ENCODE measurements at regions of chr5 and their contacts with region 1.

Region 1: DNA sequence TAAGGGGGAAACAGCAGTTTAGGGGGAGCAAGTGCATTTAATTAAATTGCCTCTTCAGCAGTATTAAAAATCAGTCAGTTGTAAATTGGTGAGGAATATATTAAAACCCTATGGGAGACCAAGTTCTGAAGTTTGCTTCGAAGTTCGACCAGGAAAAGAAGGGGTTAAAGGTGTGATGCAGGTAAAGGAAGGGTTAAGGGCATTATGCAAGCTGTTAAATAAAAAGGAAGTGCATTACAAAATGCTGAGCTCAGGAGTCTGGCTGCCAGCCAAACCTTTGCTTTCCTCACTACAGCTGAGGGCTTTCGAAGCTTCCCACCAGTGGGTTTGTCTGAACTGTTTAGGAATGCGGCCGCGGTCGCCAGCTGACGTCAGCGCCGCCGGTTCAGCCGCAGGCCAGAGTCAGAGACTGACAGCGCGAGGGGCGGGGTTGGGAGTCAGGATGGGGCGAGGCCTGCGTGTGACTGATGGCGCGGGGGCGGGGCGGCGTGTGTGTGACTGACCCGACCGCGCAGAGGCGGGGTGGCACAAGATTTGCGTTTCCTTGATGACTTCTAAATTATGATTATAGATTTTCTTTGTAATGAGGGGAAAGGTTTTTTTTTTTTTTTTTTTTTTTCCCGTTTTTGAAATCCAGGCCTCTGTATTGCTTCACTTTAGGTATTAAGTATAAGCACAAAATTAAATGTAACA is 76.6 kb downstream of the ZSWIM6 start:
- DNase-seq: peak; percentile 90
- H3K4me3 Mint-ChIP-seq: peak overlapping the region; percentile 59
- H3K27ac Mint-ChIP-seq: peak overlapping the region; percentile 56
- H3K4me1 Mint-ChIP-seq: peaks cover 23% of the 10 kb centered on the region
- H3K27me3 Mint-ChIP-seq: peaks cover 7% of the 10 kb centered on the region

Region 2: GRCh38 chr5:60340965-60341471 is 1067.6 kb before region 1 on chr5:
- intact Hi-C with region 1: no loop called
- DNase-seq: no peak
- H3K4me3 Mint-ChIP-seq: no peak overlapping the region
- H3K27ac Mint-ChIP-seq: no peak overlapping the region
- H3K4me1 Mint-ChIP-seq: no peaks in the 10 kb centered on the region
- H3K27me3 Mint-ChIP-seq: no peaks in the 10 kb centered on the region

Region 3: GRCh38 chr5:60826653-60827052 is 582.0 kb before region 1 on chr5:
- intact Hi-C with region 1: loop called (anchors 10 kb)
- DNase-seq: no peak
- H3K4me3 Mint-ChIP-seq: no peak overlapping the region
- H3K27ac Mint-ChIP-seq: no peak overlapping the region
- H3K4me1 Mint-ChIP-seq: peaks cover 31% of the 10 kb centered on the region
- H3K27me3 Mint-ChIP-seq: no peaks in the 10 kb centered on the region

Region 4: GRCh38 chr5:61162010-61162831 is 246.4 kb before region 1 on chr5 and contains the start of gene SMIM15:
- intact Hi-C with region 1: loop called (anchors 1 kb)
- DNase-seq: peak; percentile 81
- H3K4me3 Mint-ChIP-seq: peak within 1 kb of the TSS; percentile 95
- H3K27ac Mint-ChIP-seq: peak within 1 kb of the TSS; percentile 92
- H3K4me1 Mint-ChIP-seq: peaks cover 40% of the 10 kb centered on the region
- H3K27me3 Mint-ChIP-seq: no peaks in the 10 kb centered on the region
- total RNA-seq, gene SMIM15: 84.0 and 86.7 TPM in 2 replicates

Region 5: GRCh38 chr5:61280205-61280604 is 128.4 kb before region 1 on chr5:
- intact Hi-C with region 1: loop called (anchors 5 kb)
- DNase-seq: no peak
- H3K4me3 Mint-ChIP-seq: no peak overlapping the region
- H3K27ac Mint-ChIP-seq: no peak overlapping the region
- H3K4me1 Mint-ChIP-seq: peaks cover 11% of the 10 kb centered on the region
- H3K27me3 Mint-ChIP-seq: no peaks in the 10 kb centered on the region

Region 6: GRCh38 chr5:61440596-61440995 is 32.0 kb after region 1 on chr5:
- intact Hi-C with region 1: no loop called
- DNase-seq: no peak
- H3K4me3 Mint-ChIP-seq: no peak overlapping the region
- H3K27ac Mint-ChIP-seq: no peak overlapping the region
- H3K4me1 Mint-ChIP-seq: no peaks in the 10 kb centered on the region
- H3K27me3 Mint-ChIP-seq: no peaks in the 10 kb centered on the region

Region 7: DNA sequence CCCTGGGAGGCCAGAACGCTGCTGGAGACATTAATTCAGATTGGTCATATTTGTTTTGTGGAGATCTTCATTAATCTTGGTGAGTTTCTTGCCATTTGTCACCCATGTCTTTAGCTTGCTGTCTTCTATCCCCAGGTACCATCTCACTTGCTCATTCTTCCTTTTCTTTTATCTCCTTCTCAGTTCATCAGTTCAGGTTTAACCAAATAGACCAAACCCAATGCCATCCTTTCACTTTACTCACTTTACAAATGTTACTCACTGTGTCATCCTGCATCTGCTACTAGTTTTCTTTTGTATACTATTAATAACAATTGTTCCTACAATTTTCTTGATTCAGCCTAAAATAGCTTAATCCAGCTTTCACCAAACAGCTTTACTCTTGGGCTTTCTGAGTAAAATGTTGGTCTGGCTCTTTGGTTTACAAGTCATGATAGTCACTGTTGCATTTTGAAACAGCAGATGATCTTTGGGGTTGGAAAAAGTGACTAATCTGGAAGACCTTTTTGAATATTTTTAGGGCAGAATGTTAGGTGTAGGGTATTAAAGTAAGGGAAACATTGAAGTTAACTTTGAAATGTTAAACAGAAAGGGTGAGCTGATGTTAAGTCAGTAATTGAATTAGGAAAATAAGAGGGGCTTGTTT is 170.4 kb after region 1 on chr5:
- intact Hi-C with region 1: loop called (anchors 2 kb)
- DNase-seq: no peak
- H3K4me3 Mint-ChIP-seq: no peak overlapping the region
- H3K27ac Mint-ChIP-seq: no peak overlapping the region
- H3K4me1 Mint-ChIP-seq: no peaks in the 10 kb centered on the region
- H3K27me3 Mint-ChIP-seq: peaks cover 7% of the 10 kb centered on the region